Activated CD8-positive, alpha-beta T cell treated with anti-CD3 and anti-CD28 coated beads for 36 hours (primary cell): ENCODE measurements at regions of chr1 and their contacts with region 1.

Region 1: DNA sequence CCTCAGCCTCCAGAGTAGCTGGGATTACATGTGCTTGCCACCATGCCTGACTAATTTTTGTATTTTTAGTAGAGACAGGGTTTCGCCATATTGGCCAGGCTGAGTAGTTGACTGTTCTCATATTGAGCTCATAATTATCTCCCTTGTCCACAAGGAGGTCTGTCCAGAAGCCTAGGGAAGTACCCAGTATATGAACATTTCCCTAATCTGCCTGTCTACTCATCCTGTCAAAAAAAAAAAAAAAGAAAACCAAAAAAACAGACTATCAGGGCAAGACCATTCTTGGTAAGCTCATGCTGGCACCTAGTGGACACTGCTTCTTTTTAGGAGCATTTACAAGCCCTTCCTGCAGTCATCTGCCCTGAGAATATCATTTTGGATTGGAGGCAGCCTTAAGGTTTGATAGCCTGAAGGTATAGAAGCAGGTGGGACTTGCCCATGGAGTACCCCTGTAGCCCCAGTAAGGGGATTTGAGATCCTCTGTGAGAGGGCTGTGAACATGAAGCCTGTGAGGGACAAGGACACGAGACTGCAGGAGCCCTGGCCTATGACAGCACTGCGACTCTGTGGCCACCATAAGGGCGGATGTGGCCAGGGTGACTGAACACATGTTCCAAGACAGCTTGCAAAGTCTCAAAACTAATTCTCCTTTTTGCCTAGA is 10.8 kb upstream of the DUSP12 start:
- DNase-seq: peak; percentile 82
- ATAC-seq: peak; percentile 76
- H3K4me3 Mint-ChIP-seq: no peak overlapping the region
- H3K27ac Mint-ChIP-seq: peak overlapping the region; percentile 56
- H3K4me1 Mint-ChIP-seq: peaks cover 43% of the 10 kb centered on the region
- H3K27me3 Mint-ChIP-seq: peaks cover 3% of the 10 kb centered on the region
- CTCF ChIP-seq: peak; percentile 54

Region 2: DNA sequence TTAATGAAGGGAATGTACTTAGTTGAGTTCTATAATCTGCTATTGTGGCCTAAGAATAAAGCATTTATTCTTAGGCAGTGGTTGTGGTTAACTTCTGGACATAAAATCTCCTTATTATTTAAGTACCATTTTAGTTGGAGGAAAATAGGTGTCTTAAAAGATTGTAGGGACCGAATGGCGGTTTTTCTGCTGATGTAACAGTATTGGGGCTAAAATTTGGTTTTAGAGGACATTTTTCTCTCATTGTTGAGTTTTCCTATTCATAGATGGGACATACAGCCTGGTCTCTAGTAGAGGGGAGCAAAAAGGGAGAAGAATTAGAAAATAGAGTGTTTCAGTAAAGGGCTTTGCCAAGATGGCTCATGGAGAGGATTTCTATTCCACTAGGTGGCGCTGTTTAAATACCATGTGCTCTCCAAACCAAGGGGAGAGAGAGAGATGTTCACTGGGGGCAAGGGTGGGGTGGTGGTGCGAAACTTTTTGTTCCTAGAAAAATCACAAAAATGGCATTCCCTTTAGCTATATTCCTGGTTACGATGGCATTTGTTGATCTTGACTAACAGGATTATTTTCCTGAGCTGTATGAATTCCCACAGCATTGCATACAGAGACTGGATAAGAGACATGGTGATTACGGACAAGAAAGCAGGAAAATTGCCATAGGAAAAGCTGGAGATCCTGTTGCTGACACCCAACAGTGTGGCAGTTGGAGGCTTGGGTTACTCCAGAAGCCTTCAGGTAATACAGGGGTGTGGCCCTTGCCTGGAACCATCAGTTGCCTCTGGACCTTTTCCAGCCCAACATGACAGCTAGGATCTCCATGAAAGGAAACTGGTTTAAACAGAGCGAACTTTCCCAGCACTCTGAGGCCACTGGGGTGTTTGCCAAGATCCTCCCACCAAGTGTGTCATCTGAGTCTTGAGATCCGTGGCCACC is 251.7 kb before region 1 on chr1:
- CTCF ChIA-PET with region 1: interaction called, 69 read pairs
- POLR2A ChIA-PET with region 1: no interaction called
- intact Hi-C with region 1: loop called (anchors 2 kb)
- DNase-seq: peak; percentile 46
- ATAC-seq: peak; percentile 75
- H3K4me3 Mint-ChIP-seq: no peak overlapping the region
- H3K27ac Mint-ChIP-seq: no peak overlapping the region
- H3K4me1 Mint-ChIP-seq: peaks cover 13% of the 10 kb centered on the region
- H3K27me3 Mint-ChIP-seq: peaks cover 30% of the 10 kb centered on the region
- CTCF ChIP-seq: peak; percentile 85

Region 3: DNA sequence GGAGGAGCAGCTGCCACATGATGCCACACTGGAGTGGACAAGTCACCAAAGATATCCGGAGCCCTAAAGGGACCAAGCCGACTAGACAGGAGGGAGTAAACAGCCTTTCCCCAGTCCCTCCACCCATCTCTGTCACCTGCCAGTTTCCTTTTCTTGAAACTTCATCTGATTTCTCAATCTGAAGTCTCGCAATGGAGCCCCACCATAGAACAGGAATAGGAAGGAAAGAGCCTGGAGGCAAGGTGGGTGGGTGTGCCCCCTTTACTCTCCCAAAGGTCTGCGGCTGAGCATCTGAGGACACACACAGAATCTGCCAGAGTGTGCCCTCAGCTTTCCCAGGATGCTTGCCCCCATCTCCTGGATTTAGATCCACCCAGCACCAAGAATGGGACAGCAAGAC is 107.7 kb before region 1 on chr1 and contains the start of gene FCGR3B:
- CTCF ChIA-PET with region 1: no interaction called
- POLR2A ChIA-PET with region 1: no interaction called
- intact Hi-C with region 1: loop called (anchors 10 kb)
- DNase-seq: no peak
- ATAC-seq: no peak
- H3K4me3 Mint-ChIP-seq: no peak within 1 kb of the TSS
- H3K27ac Mint-ChIP-seq: no peak within 1 kb of the TSS
- H3K4me1 Mint-ChIP-seq: peaks cover 11% of the 10 kb centered on the region
- H3K27me3 Mint-ChIP-seq: no peaks in the 10 kb centered on the region
- CTCF ChIP-seq: no peak
- total RNA-seq, gene FCGR3B: not detected

Region 4: DNA sequence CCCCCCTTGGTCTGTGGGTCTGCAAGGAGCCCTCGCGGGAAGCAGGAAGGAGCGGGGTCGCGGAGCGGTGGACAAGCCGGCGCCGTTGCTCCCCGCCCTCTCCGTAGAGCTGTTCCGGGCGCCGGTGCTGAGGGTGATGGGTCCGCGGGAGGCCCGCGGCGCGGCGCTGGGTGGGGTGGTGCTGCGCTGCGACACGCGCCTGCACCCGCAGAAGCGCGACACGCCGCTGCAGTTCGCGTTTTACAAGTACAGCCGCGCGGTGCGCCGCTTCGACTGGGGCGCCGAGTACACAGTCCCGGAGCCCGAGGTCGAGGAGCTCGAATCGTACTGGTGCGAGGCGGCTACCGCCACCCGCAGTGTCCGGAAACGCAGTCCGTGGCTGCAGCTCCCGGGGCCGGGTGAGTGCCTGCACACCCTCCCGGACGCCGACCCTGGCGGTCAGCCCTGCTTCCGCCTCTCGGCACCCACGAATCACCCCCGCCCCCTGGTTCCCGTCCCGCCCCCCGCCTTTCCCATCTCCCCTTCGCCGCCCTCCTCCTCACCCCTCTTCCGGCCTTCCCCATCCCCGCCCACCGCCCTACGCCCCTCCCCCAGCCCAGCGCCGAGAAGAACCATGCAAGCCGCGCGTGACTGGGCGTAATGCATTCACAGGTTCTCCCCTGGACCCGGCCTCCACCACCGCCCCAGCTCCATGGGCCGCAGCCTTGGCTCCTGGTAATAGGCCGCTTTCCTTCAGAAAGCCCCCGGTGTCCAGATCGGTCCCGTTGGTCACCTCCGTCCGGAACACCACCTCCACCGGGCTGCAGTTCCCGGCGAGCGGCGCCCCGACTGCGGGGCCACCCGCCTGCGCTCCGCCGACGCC is 11.9 kb before region 1 on chr1:
- CTCF ChIA-PET with region 1: interaction called, 32 read pairs
- POLR2A ChIA-PET with region 1: interaction called, 3 read pairs
- intact Hi-C with region 1: no loop called
- DNase-seq: peak; percentile 75
- ATAC-seq: peak; percentile 56
- H3K4me3 Mint-ChIP-seq: peak overlapping the region; percentile 79
- H3K27ac Mint-ChIP-seq: peak overlapping the region; percentile 48
- H3K4me1 Mint-ChIP-seq: peaks cover 50% of the 10 kb centered on the region
- H3K27me3 Mint-ChIP-seq: peaks cover 17% of the 10 kb centered on the region
- CTCF ChIP-seq: no peak